HCT116 (cell line): ENCODE measurements at regions of chr7 and their contacts with region 1.

Region 1: GRCh38 chr7:138738551-138739335 is 37.6 kb upstream of the SVOPL start:
- DNase-seq: peak; percentile 78
- ATAC-seq: peak; percentile 93
- H3K4me3 ChIP-seq: no peak overlapping the region
- H3K27ac ChIP-seq: no peak overlapping the region
- H3K4me1 ChIP-seq: peaks cover 0 to 12% of the 10 kb centered on the region in 2 experiments; a peak in 2 of 4 replicates
- H3K27me3 ChIP-seq: no peaks in the 10 kb centered on the region
- CTCF ChIP-seq: peak; percentile 86 to 98 (median 93)
- POLR2A ChIP-seq: no peak
- RAD21 ChIP-seq: peak; percentile 98

Region 2: GRCh38 chr7:137898839-137899721 is 839.7 kb before region 1 on chr7:
- CTCF ChIA-PET with region 1: interaction called, 10 read pairs
- POLR2A ChIA-PET with region 1: no interaction called
- RAD21 ChIA-PET with region 1: no interaction called
- intact Hi-C with region 1: loop called (anchors 5 kb)
- DNase-seq: peak; percentile 42
- ATAC-seq: peak; percentile 97
- H3K4me3 ChIP-seq: no peak overlapping the region
- H3K27ac ChIP-seq: no peak overlapping the region
- H3K4me1 ChIP-seq: no peaks in the 10 kb centered on the region
- H3K27me3 ChIP-seq: no peaks in the 10 kb centered on the region
- CTCF ChIP-seq: peak; percentile 80 to 96 (median 89)
- POLR2A ChIP-seq: no peak
- RAD21 ChIP-seq: peak; percentile 90

Region 3: DNA sequence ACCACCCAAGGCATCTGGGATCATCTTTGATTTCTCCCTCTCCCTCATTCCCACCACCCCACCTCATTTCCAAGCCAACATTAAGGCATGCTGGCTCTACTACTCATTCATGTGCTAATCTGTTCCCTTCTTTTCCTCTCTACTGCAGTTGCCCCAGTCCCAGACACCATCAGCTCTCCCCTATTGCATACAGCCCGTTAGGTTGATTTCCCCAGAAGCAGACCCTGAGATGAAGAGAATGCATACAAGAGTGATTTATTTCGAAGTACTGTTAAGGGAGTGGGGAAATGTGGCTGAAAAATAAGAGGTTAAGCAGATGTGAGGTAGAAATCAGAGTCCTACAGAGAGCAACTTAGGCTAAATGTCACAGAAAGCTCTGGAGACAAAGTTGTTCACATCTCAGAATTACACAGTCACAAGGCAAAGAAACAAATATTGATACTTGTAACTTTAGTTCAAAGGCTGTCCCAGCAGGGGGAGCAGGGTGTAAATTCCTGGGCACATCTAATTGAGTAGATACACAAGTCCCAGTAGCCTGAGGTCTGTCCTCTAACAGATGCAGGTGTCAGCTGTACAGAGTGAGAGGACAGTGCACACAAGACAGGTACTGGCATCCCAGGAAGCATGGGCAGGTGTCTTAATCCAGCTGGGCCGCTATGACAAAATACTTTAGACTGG is 641.5 kb before region 1 on chr7:
- CTCF ChIA-PET with region 1: interaction called, 6 read pairs
- POLR2A ChIA-PET with region 1: no interaction called
- RAD21 ChIA-PET with region 1: no interaction called
- intact Hi-C with region 1: loop called (anchors 1 kb)
- DNase-seq: peak; percentile 41
- ATAC-seq: peak; percentile 95
- H3K4me3 ChIP-seq: no peak overlapping the region
- H3K27ac ChIP-seq: no peak overlapping the region
- H3K4me1 ChIP-seq: no peaks in the 10 kb centered on the region
- H3K27me3 ChIP-seq: no peaks in the 10 kb centered on the region
- CTCF ChIP-seq: peak; percentile 43 to 57 (median 53)
- POLR2A ChIP-seq: no peak
- RAD21 ChIP-seq: peak; percentile 60

Region 4: DNA sequence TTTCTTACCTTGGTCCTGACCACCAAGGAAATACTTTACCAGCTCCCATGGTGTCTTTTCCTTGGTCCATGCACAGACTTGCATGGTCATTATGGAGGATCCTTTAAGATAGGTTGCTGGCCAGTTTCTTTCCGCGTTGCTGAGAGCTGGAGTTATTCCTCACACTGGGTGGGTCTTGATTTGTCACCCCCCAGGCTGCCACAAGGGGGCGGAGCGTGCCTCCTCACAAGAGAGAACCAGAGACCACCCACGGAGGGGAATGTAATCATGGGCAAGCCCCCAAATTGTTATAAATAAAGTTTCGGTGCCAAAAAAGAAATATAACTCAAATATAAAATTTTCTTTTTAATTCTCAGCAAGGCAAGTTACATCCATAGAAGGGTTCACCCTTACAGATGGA is 289.2 kb before region 1 on chr7:
- CTCF ChIA-PET with region 1: interaction called, 7 read pairs
- POLR2A ChIA-PET with region 1: no interaction called
- RAD21 ChIA-PET with region 1: no interaction called
- intact Hi-C with region 1: loop called (anchors 2 kb)
- DNase-seq: no peak
- ATAC-seq: peak; percentile 73
- H3K4me3 ChIP-seq: no peak overlapping the region
- H3K27ac ChIP-seq: no peak overlapping the region
- H3K4me1 ChIP-seq: no peaks in the 10 kb centered on the region
- H3K27me3 ChIP-seq: no peaks in the 10 kb centered on the region
- CTCF ChIP-seq: peak; percentile 16 to 70 (median 55); a peak in 4 of 6 replicates
- POLR2A ChIP-seq: no peak
- RAD21 ChIP-seq: peak; percentile 42

Region 5: GRCh38 chr7:139054101-139054500 is 315.4 kb after region 1 on chr7:
- CTCF ChIA-PET with region 1: no interaction called
- POLR2A ChIA-PET with region 1: no interaction called
- RAD21 ChIA-PET with region 1: no interaction called
- intact Hi-C with region 1: no loop called
- DNase-seq: no peak
- ATAC-seq: no peak
- H3K4me3 ChIP-seq: no peak overlapping the region
- H3K27ac ChIP-seq: no peak overlapping the region
- H3K4me1 ChIP-seq: no peaks in the 10 kb centered on the region
- H3K27me3 ChIP-seq: no peaks in the 10 kb centered on the region
- CTCF ChIP-seq: no peak
- POLR2A ChIP-seq: no peak
- RAD21 ChIP-seq: no peak